ENCODE measurements at regions of chr5 and their contacts with region 1.

Region 1: GRCh38 chr5:42950440-42951292 is 89.5 kb downstream of the ANXA2R start:
- DNase-seq: peak; percentile 52 to 58 (median 55)
- ATAC-seq: peak; percentile 72 to 80 (median 75)
- H3K4me3 ChIP-seq: peak overlapping the region; percentile 18 to 43 (median 28)
- H3K27ac ChIP-seq: peak overlapping the region; percentile 57 to 80 (median 76)
- H3K4me1 ChIP-seq: peaks cover 0 to 5% (median 0%) of the 10 kb centered on the region in 4 donors
- H3K27me3 ChIP-seq: peaks cover 4 to 43% of the 10 kb centered on the region in 2 donors
- CTCF ChIP-seq: no peak
- POLR2A ChIP-seq: peak; percentile 39

Region 2: DNA sequence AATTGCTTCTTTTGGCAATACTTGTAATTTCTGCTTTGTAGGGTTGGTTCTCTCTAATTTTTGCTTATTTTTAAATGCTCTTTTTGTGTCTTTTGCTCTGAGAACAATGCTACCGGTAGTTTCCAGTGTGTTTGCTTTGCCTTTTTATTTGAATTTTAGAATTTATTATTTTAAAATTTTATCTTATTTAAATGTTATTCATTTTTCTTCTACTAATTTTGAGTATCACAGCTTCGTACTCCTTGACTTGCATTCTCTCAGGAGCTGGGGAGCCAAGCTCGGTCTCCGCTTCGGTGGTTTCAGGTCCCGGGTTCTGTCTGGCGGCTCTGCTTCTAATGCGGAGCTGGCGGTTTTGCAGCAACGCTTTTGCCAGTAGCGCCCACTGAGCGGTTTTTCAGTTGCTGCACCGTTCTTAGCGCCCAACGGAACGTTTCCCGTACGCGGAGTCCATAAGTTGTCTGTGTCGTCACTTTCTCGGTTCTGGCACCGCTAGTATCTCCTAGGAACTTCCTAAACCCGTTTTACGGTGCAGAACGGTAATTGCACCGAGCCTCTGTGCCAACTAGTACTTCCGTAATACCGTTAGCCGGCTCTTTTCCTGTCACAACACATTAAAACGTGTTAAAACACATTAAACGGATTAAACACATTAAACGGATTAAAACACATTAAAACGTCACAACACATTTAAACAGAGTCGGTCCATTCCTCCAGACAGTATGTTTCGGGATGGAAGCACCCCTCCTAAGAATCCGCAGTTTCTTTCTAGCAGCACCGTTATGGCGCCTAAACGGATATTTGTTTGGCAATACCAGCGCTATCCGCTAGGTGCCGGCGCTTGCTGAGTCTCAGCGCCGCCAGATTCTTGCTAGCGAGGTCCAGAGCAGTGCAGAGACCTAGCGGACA is 43.8 kb after region 1 on chr5:
- intact Hi-C with region 1: loop called in 1 of 2 experiments (anchors 10 kb)
- DNase-seq: peak; percentile 77 to 82 (median 81)
- ATAC-seq: peak; percentile 73 to 78 (median 76)
- H3K4me3 ChIP-seq: peak overlapping the region; percentile 14 to 31 (median 22)
- H3K27ac ChIP-seq: peak overlapping the region; percentile 82 to 94 (median 87)
- H3K4me1 ChIP-seq: no peaks in the 10 kb centered on the region
- H3K27me3 ChIP-seq: peaks cover 14 to 67% of the 10 kb centered on the region in 2 donors
- CTCF ChIP-seq: peak; percentile 56 to 66 (median 58)
- POLR2A ChIP-seq: no peak

Region 3: DNA sequence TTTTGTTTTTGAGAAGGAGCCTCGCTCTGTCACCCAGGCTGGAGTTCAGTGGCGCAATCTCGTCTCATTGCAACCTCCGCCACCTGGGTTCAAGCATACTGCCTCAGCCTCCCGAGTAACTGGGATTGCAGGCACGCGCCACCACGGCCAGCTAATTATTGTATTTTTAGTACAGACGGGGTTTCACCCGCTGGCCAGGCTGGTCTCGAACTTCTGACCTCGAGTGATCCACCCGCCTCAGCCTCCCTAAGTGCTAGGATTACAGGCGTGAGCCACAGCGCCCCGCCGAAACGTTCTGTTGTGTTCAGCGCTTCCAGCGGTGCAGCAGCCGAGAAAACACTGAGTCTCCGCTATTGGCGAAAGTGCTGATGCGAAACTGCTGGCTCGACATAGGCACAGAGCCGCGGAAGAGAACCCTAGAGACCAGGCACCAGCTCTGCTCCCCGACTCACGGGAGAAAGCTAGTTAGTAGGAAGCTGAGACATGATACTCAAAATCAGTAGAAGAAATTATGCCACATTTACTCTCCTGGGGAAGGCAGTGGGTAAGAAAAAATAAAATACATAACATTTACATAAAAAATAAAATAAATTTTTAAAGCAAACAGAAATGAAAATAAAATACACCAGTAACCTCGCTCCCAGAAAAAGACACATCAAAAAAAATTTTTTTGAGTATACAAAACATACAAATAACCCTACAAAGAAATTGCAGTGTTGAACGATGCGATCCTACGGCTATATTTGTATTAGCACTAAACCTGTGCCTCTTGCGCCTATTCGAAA is 57.9 kb after region 1 on chr5:
- intact Hi-C with region 1: no loop called
- DNase-seq: peak; percentile 75 to 82 (median 79)
- ATAC-seq: peak; percentile 75 to 86 (median 83)
- H3K4me3 ChIP-seq: peak overlapping the region; percentile 32 to 39 (median 33)
- H3K27ac ChIP-seq: peak overlapping the region; percentile 55 to 91 (median 72)
- H3K4me1 ChIP-seq: peaks cover 0 to 3% (median 0%) of the 10 kb centered on the region in 4 donors
- H3K27me3 ChIP-seq: peaks cover 0 to 48% of the 10 kb centered on the region in 2 donors
- CTCF ChIP-seq: no peak
- POLR2A ChIP-seq: peak; percentile 46

Region 4: DNA sequence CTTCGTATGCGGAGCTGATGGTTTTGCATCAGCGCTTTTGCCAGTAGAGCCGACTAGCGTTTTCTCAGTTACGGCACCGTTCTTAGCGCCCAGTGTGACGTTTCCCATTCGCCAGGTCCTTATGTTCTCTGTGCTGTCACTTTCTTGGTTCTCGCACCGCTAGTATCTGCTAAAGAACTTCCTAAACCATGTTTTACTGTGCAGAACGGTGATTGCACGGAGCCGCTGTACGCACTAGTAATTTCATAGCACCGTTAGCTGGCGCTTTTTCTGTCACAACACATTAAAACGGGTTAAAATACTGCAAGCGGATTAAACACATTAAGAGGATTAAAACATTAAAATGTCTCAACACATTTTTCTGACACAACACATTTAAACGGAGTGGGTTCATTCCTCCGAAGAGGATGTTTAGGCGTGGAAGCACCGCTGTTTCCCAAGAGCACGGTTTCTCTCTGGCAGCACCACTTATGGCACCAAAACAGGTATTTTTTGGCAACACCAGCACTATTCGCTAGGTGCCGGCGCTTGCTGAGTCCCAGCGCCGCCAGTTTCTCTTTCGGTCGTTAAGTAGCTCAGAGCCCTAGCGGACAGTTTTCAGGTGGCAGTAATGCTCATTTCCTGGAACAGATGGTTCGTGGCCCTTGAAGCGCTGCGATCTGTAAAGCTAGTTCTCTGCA is 69.1 kb after region 1 on chr5:
- intact Hi-C with region 1: loop called in 1 of 2 experiments (anchors 5 kb)
- DNase-seq: peak; percentile 66 to 75 (median 70)
- ATAC-seq: peak; percentile 66 to 83 (median 82)
- H3K4me3 ChIP-seq: peak overlapping the region; percentile 21 to 41 (median 32)
- H3K27ac ChIP-seq: peak overlapping the region; percentile 41 to 93 (median 78)
- H3K4me1 ChIP-seq: no peaks in the 10 kb centered on the region
- H3K27me3 ChIP-seq: peaks cover 7 to 42% of the 10 kb centered on the region in 2 donors
- CTCF ChIP-seq: peak; percentile 27 to 49 (median 45)
- POLR2A ChIP-seq: peak; percentile 39

Measured in right lobe of liver (tissue), 6 donors.